Left colon (tissue), 2 donors: ENCODE measurements at regions of chr1 and their contacts with region 1.

Region 1: DNA sequence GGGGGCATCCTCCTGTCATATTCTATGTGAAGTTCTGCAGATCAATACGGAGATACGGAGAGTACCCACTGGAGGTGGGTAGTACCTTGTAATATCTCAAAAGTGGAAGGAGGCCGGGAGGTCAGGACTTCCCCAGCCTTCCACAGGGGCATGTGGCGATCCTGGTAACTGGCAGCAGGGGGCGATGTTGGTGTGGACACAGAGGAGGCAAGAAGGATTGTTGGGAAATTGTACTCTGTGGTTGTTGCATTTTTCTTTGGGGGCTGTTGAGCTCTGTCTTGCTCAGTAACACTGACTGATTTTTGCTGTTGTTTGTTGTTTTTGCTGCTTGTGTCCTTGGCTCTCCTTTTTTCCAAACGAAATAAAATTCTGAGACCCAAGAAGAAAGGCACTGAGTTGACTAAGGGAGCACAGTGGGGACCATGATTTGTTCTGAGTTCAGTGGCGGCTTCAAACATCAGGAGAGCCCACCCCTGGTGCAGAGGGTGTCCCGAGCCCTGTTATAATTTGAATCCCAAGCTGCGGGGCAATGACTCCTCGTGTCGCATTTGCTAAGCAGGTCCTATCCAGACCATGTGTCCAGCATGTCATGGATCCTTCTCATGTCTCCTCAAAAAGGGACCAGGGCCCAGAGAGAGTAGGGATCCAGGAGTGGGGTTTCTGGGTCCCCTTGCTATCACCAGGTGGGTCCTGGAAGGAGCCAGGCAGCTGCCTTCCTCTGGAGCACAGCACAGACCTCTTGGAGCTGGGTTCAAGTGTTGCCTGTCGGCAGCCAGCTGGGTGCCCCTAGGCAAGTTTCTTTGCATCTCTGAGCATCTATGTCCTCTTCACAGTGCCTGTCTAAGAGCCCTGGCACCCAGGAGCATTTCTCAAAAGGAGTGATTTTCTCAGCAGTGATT is 22.8 kb downstream of the LHX4 start:
- DNase-seq: peak; percentile 65 to 85
- ATAC-seq: peak; percentile 84

Region 2: DNA sequence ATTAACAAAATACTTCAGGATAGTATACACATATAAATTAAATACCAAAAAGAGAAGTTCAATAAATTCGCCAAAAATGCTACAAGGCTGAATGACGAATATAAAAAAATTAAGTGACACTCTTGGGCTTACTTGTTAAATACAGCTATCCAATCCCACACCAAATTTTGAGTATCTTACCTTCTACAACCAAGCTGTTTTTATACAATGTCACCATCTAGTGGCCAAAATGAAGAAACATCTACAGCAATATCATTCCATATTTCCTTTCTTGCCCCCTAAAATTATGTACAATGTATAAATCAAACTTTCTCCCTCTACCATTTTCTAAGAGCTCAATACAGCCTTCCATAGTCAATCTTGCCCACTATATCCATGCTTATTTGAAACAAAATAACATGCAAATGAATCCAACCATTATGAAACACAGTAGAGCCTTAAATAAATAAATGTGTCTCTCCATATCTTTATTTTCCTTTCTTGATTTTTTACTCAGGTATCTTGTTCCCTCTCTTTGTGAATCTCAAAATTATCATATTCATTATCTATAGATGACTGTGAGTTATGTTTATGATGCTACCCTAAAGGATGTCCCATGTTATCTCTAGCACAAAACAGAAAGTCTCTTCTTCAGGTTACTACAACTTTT is 163.2 kb after region 1 on chr1:
- intact Hi-C with region 1: loop called in 1 of 2 experiments (anchors 2 kb)
- DNase-seq: no peak
- ATAC-seq: peak; percentile 51

Region 3: GRCh38 chr1:180482425-180483275 is 229.8 kb after region 1 on chr1:
- intact Hi-C with region 1: loop called in 1 of 2 experiments (anchors 5 kb)
- DNase-seq: no peak
- ATAC-seq: peak; percentile 34